SK-N-SH (cell line): ENCODE measurements at regions of chr17 and their contacts with region 1.

Region 1: DNA sequence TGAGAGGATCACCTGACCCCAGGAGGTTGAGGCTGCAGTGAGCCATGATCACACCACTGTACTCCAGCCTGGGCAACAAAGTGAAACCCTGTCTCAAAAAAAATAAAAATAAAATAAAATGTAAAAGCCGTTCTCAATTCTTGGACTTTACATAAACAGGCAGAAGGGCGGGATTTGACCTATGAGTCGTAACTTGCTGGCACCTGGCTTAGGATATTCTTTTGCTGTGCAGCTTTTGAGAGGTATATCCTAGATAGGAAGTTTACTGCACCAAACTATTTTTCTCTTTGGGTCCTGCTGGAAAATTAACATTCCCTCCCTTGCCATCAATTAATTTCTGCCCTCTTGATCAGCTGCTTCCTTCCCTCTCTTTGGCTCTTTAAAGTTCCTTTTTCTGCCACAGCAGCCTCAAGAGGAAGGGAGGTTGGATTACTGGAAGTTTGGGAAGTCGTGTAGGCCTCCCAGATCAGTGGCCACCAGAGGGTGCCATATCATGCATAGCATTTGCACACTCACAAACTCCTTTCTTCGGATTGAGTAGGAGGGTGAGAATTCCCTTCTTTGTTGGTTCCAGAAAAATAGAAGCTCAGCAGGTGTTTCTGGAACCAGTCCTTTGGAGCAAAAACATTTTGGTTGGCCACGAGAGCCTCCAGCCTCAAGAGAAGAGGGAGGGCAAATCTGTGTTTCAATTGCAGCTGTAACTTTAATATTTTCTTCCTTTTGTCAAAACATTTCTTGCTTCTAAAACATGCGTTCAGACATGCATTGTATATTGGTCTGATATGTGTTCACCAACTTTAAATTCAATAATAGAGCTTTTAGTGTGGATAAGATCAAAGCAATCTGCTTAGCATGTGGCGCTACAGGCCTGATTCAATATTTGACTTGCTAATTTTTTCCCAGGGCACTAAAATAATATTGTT is 147.3 kb downstream of the CCDC182 start:
- DNase-seq: peak; percentile 82
- H3K4me3 ChIP-seq: no peak overlapping the region; a peak in 1 of 4 replicates
- H3K27ac ChIP-seq: peak overlapping the region; percentile 48 to 99
- H3K4me1 ChIP-seq: peaks cover 5 to 87% of the 10 kb centered on the region in 2 experiments; a peak in 3 of 4 replicates
- H3K27me3 ChIP-seq: no peaks in the 10 kb centered on the region
- CTCF ChIP-seq: peak; percentile 99
- EP300 ChIP-seq: peak; percentile 46 to 99; a peak in 2 of 4 replicates
- RAD21 ChIP-seq: peak; percentile 87

Region 2: DNA sequence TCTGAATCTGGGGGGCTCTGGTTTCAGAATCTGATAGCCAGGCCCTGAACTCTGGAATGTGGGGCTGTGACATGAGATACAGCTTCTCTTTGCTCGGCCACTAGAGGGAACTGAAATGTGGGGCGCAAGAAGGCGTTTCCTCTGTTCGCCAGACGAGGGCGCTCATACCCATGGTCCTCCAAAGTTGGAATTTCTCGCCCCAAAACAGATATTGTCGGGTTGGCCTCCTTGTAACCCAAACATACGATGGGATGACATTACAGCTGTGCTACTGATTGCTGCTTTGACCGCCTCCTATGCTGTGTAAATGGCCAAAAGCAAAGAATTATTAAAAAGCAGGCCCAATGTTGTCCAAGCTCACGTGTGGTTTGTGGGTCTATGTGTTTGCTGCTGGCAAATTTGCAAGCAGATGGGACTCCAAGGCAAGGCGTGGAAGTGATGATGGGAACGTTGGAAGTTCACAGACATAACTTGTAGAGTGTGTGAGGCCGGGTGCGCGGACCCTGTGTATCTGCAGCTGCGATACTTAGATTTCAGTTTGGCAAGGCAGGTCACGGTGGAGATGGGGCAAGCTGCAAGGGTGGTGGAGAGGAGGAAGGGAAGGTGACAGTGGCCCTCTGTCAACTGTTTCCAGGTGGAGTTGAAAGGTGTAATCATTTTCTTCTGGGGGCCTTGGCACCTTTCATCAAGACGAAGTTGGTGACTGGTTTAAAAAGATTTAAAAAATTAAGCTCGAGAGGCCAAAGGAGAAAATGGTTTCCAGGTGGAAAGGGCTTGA is 354.4 kb before region 1 on chr17:
- CTCF ChIA-PET with region 1: interaction called, 17 read pairs
- POLR2A ChIA-PET with region 1: no interaction called
- DNase-seq: peak; percentile 74
- H3K4me3 ChIP-seq: peak overlapping the region in 1 of 2 experiments; percentile 40; a peak in 1 of 4 replicates
- H3K27ac ChIP-seq: no peak overlapping the region; a peak in 1 of 4 replicates
- H3K4me1 ChIP-seq: peaks cover 0 to 9% of the 10 kb centered on the region in 2 experiments; a peak in 1 of 4 replicates
- H3K27me3 ChIP-seq: no peaks in the 10 kb centered on the region
- CTCF ChIP-seq: peak; percentile 100
- EP300 ChIP-seq: no peak; a peak in 1 of 4 replicates
- RAD21 ChIP-seq: peak; percentile 89

Region 3: GRCh38 chr17:57541472-57542394 is 56.1 kb before region 1 on chr17:
- CTCF ChIA-PET with region 1: interaction called, 83 read pairs
- POLR2A ChIA-PET with region 1: interaction called, 19 read pairs
- DNase-seq: peak; percentile 76
- H3K4me3 ChIP-seq: peak overlapping the region in 1 of 2 experiments; percentile 10; a peak in 1 of 4 replicates
- H3K27ac ChIP-seq: peak overlapping the region; percentile 65 to 100
- H3K4me1 ChIP-seq: peaks cover 52 to 98% of the 10 kb centered on the region in 2 experiments
- H3K27me3 ChIP-seq: no peaks in the 10 kb centered on the region
- CTCF ChIP-seq: no peak
- EP300 ChIP-seq: peak; percentile 71 to 97; a peak in 3 of 4 replicates
- RAD21 ChIP-seq: peak; percentile 54

Region 4: GRCh38 chr17:57577751-57578607 is 19.8 kb before region 1 on chr17:
- CTCF ChIA-PET with region 1: interaction called, 109 read pairs
- POLR2A ChIA-PET with region 1: interaction called, 6 read pairs
- DNase-seq: peak; percentile 47
- H3K4me3 ChIP-seq: no peak overlapping the region
- H3K27ac ChIP-seq: peak overlapping the region in 1 of 2 experiments; percentile 84; a peak in 2 of 4 replicates
- H3K4me1 ChIP-seq: peaks cover 0 to 66% of the 10 kb centered on the region in 2 experiments; a peak in 3 of 4 replicates
- H3K27me3 ChIP-seq: no peaks in the 10 kb centered on the region
- CTCF ChIP-seq: no peak
- EP300 ChIP-seq: no peak
- RAD21 ChIP-seq: no peak

Region 5: GRCh38 chr17:57662644-57663308 is 65.0 kb after region 1 on chr17:
- CTCF ChIA-PET with region 1: interaction called, 298 read pairs
- POLR2A ChIA-PET with region 1: interaction called, 21 read pairs
- DNase-seq: peak; percentile 97
- H3K4me3 ChIP-seq: peak overlapping the region; percentile 45 to 47
- H3K27ac ChIP-seq: peak overlapping the region; percentile 99 to 100
- H3K4me1 ChIP-seq: peaks cover 28 to 79% of the 10 kb centered on the region in 2 experiments
- H3K27me3 ChIP-seq: no peaks in the 10 kb centered on the region
- CTCF ChIP-seq: peak; percentile 37
- EP300 ChIP-seq: peak; percentile 54 to 88; a peak in 3 of 4 replicates
- RAD21 ChIP-seq: no peak; the same call in none of the 2 replicates

Region 6: GRCh38 chr17:57747221-57748017 is 149.6 kb after region 1 on chr17:
- CTCF ChIA-PET with region 1: interaction called, 117 read pairs
- POLR2A ChIA-PET with region 1: interaction called, 5 read pairs
- DNase-seq: peak; percentile 89
- H3K4me3 ChIP-seq: no peak overlapping the region
- H3K27ac ChIP-seq: peak overlapping the region in 1 of 2 experiments; percentile 85; a peak in 2 of 4 replicates
- H3K4me1 ChIP-seq: peaks cover 0 to 40% of the 10 kb centered on the region in 2 experiments; a peak in 2 of 4 replicates
- H3K27me3 ChIP-seq: peaks cover 18% of the 10 kb centered on the region; the same call in 1 of the 2 replicates
- CTCF ChIP-seq: peak; percentile 99
- EP300 ChIP-seq: peak in 1 of 2 experiments; percentile 64; a peak in 1 of 4 replicates
- RAD21 ChIP-seq: peak; percentile 100

Region 7: GRCh38 chr17:57806167-57806830 is 208.5 kb after region 1 on chr17:
- CTCF ChIA-PET with region 1: no interaction called
- POLR2A ChIA-PET with region 1: no interaction called
- DNase-seq: no peak
- H3K4me3 ChIP-seq: no peak overlapping the region
- H3K27ac ChIP-seq: no peak overlapping the region
- H3K4me1 ChIP-seq: peaks cover 0 to 26% of the 10 kb centered on the region in 2 experiments; a peak in 2 of 4 replicates
- H3K27me3 ChIP-seq: no peaks in the 10 kb centered on the region
- CTCF ChIP-seq: no peak
- EP300 ChIP-seq: no peak
- RAD21 ChIP-seq: no peak